H1 (cell line): ENCODE measurements at regions of chr7 and their contacts with region 1.

Region 1: GRCh38 chr7:129091484-129092002 is 36.6 kb upstream of the TNPO3 start:
- DNase-seq: peak; percentile 83 to 100
- H3K4me3 ChIP-seq: no peak overlapping the region
- H3K27ac ChIP-seq: no peak overlapping the region
- H3K4me1 ChIP-seq: no peaks in the 10 kb centered on the region
- H3K27me3 ChIP-seq: no peaks in the 10 kb centered on the region
- CTCF ChIP-seq: peak; percentile 98 to 99 (median 99)
- EP300 ChIP-seq: no peak
- POLR2A ChIP-seq: no peak
- RAD21 ChIP-seq: peak; percentile 99 to 100

Region 2: DNA sequence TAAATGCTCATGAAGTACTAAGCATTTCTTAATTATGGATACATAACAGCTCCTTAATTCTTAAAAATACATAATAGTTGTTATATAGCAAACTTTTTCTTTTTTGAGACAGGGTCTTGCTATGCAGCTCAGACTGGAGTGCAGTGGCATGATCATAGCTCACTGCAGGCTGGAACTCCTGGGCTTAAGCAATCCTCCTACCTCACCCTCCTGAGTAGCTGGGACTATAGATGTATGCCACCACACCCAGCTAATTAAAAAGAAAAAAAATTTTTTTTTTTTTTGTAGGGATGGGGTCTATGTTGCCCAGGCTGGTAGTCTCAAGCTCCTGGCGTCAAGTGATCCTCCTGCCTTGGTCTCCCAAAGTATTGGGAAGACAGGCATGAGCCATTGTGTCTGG is 122.9 kb before region 1 on chr7:
- CTCF ChIA-PET with region 1: interaction called, 14 read pairs
- POLR2A ChIA-PET with region 1: interaction called, 3 read pairs
- DNase-seq: no peak
- H3K4me3 ChIP-seq: no peak overlapping the region
- H3K27ac ChIP-seq: no peak overlapping the region
- H3K4me1 ChIP-seq: no peaks in the 10 kb centered on the region
- H3K27me3 ChIP-seq: no peaks in the 10 kb centered on the region
- CTCF ChIP-seq: no peak
- EP300 ChIP-seq: no peak
- POLR2A ChIP-seq: no peak
- RAD21 ChIP-seq: no peak

Region 3: DNA sequence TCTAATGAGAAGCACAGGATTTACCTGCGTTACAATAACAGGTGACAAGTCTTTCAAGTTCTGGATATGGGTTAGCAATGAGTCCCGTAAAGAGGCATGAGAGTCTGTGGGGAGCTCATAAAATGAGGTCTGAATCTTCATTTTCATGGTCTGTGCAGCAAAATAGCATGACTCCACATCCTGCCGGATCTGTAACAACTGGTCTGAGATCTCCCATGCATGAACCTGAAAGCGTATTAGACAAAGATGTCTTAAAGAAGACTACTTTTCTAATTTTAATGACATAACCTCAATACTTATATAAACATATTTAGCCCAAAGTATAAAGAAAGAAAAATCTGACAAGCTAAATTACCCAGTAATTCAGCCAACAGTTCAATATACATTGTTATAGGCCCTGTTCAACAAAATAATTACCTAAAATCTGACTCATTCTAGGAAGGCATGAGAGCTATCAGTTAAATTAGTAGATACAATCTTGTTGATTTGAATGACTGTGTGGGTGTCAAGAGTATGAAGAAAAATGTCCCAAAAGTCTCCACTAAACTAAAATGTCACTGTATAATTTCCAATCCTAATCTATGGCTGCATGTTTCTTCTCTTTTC is 73.5 kb before region 1 on chr7:
- CTCF ChIA-PET with region 1: interaction called, 16 read pairs
- POLR2A ChIA-PET with region 1: no interaction called
- DNase-seq: no peak
- H3K4me3 ChIP-seq: no peak overlapping the region
- H3K27ac ChIP-seq: no peak overlapping the region
- H3K4me1 ChIP-seq: no peaks in the 10 kb centered on the region
- H3K27me3 ChIP-seq: no peaks in the 10 kb centered on the region
- CTCF ChIP-seq: no peak
- EP300 ChIP-seq: no peak
- POLR2A ChIP-seq: no peak
- RAD21 ChIP-seq: no peak

Region 4: DNA sequence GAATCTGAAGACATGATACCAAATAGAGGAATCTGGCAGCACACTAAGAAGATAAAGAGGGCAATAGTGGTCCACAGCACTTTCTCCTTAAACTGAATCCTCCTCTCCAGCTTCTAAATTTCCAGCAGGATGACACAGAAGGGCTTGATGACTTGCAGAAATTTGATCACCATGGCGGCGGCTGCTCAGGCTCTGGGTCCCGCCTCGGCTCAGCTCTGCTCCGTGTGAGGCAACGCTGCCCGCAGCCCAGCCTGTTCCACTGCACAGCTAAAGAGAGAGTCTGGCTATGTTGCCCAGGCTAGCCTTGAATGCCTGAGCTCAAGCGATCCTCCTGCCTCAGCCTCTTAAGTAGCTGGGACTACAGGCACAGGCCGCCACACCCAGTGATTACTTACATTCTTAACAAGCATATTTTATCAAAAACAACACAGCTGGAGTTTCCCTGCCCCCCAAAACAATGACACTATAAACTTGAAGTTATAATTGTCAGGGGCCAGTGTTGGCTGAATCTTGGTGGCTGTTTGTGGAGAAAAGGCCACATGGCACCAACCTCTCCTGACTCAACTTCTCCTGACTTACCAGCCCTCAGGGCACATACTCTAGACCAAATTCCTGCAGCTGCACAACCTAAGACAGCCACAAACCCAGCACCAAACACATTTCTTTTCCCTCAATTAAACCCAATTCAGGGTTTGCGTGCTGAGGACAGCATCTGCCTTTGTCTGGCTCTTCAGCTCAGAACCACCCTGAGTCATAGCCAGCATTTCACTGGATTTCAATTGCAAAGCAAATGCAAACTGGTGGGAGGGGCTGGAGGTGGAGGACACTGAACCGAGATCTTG is 25.0 kb before region 1 on chr7:
- CTCF ChIA-PET with region 1: interaction called, 22 read pairs
- POLR2A ChIA-PET with region 1: interaction called, 3 read pairs
- DNase-seq: no peak
- H3K4me3 ChIP-seq: no peak overlapping the region
- H3K27ac ChIP-seq: no peak overlapping the region; the same call in 1 of the 2 replicates
- H3K4me1 ChIP-seq: peaks cover 0 to 10% (median 5%) of the 10 kb centered on the region in 4 experiments; a peak in 4 of 7 replicates
- H3K27me3 ChIP-seq: no peaks in the 10 kb centered on the region
- CTCF ChIP-seq: no peak
- EP300 ChIP-seq: no peak
- POLR2A ChIP-seq: peak in 1 of 2 experiments; percentile 61; a peak in 1 of 3 replicates
- RAD21 ChIP-seq: no peak

Region 5: GRCh38 chr7:129163875-129164544 is 72.5 kb after region 1 on chr7:
- CTCF ChIA-PET with region 1: interaction called, 10 read pairs
- POLR2A ChIA-PET with region 1: interaction called, 5 read pairs
- DNase-seq: no peak
- H3K4me3 ChIP-seq: no peak overlapping the region
- H3K27ac ChIP-seq: no peak overlapping the region
- H3K4me1 ChIP-seq: peaks cover 2 to 13% (median 12%) of the 10 kb centered on the region in 4 experiments
- H3K27me3 ChIP-seq: no peaks in the 10 kb centered on the region; a peak in 1 of 7 replicates
- CTCF ChIP-seq: peak in 2 of 3 experiments; percentile 45 to 70; a peak in 2 of 4 replicates
- EP300 ChIP-seq: no peak
- POLR2A ChIP-seq: no peak
- RAD21 ChIP-seq: peak; percentile 48 to 52

Region 6: GRCh38 chr7:129240119-129240815 is 148.7 kb after region 1 on chr7:
- CTCF ChIA-PET with region 1: no interaction called
- POLR2A ChIA-PET with region 1: no interaction called
- DNase-seq: no peak
- H3K4me3 ChIP-seq: no peak overlapping the region
- H3K27ac ChIP-seq: no peak overlapping the region
- H3K4me1 ChIP-seq: no peaks in the 10 kb centered on the region
- H3K27me3 ChIP-seq: no peaks in the 10 kb centered on the region
- CTCF ChIP-seq: no peak
- EP300 ChIP-seq: no peak
- POLR2A ChIP-seq: no peak
- RAD21 ChIP-seq: no peak